GM23248 (cell line): ENCODE measurements at regions of chr4 and their contacts with region 1.

Region 1: GRCh38 chr4:143482840-143483239 is 30.7 kb upstream of the SMARCA5 start:
- DNase-seq: peak; percentile 73
- H3K4me3 ChIP-seq: no peak overlapping the region
- H3K27ac ChIP-seq: no peak overlapping the region
- H3K4me1 ChIP-seq: no peaks in the 10 kb centered on the region
- H3K27me3 ChIP-seq: no peaks in the 10 kb centered on the region

Region 2: GRCh38 chr4:141977433-141977832 is 1505.4 kb before region 1 on chr4:
- in situ Hi-C with region 1: no loop called
- DNase-seq: peak; percentile 10
- H3K4me3 ChIP-seq: no peak overlapping the region
- H3K27ac ChIP-seq: no peak overlapping the region
- H3K4me1 ChIP-seq: no peaks in the 10 kb centered on the region
- H3K27me3 ChIP-seq: no peaks in the 10 kb centered on the region

Region 3: DNA sequence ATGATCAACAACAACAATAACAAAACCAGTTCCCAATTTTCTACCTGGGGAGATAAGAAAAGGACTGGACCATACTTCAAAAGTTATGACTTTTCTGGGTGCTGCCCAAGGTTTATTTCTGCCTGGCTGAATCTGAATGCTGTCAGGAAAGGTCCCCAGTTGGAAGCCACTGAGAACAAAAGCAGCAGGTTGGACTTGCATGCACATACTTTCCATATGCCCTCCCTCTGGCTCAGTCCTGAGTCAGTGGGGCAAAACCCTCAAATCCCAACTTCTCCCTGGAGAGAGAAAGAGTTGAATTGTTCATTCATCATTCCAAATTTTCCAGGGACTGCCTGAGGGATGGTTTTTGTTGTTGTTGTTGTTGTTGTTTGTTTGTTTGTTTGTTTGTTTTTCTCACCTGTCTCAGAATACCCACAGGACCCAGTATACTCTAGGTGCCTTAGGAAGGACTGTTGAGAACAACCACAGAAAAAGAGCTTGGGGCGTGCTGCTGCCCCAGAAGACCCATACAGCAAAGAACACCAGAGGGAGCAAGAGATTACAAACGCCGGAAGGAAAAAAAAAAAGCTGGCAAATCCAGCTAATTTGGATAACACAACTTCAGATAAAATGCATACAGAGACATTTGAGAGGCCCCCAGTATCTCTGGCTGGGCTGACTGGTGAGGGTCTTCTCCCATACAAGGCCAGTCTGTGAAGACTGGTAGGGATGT is 497.8 kb before region 1 on chr4:
- in situ Hi-C with region 1: loop called (anchors 25 kb)
- DNase-seq: peak; percentile 61
- H3K4me3 ChIP-seq: no peak overlapping the region
- H3K27ac ChIP-seq: no peak overlapping the region
- H3K4me1 ChIP-seq: no peaks in the 10 kb centered on the region
- H3K27me3 ChIP-seq: peaks cover 16% of the 10 kb centered on the region

Region 4: DNA sequence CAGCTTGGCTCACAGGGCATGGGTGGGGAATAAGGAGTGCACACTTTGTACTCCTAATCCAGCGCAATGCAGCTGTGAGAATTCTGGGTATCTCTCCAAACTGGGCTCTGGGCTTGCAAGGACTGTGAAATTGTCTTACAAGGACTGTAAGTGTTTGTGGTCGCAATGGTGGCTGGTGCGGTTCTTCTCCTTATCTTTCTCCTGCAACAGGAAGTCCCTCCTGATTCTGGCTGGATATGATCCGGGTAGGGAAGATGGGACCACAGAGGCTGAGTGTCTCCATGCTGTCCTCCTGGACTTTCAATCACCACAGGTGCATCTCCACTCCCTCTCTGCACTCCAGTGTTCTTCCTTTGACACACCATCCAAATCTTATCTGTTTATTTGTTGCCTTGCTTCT is 478.2 kb after region 1 on chr4:
- in situ Hi-C with region 1: no loop called
- DNase-seq: no peak
- H3K4me3 ChIP-seq: no peak overlapping the region
- H3K27ac ChIP-seq: no peak overlapping the region
- H3K4me1 ChIP-seq: no peaks in the 10 kb centered on the region
- H3K27me3 ChIP-seq: no peaks in the 10 kb centered on the region